HCT116 (cell line): ENCODE measurements at regions of chr12 and their contacts with region 1.

Region 1: DNA sequence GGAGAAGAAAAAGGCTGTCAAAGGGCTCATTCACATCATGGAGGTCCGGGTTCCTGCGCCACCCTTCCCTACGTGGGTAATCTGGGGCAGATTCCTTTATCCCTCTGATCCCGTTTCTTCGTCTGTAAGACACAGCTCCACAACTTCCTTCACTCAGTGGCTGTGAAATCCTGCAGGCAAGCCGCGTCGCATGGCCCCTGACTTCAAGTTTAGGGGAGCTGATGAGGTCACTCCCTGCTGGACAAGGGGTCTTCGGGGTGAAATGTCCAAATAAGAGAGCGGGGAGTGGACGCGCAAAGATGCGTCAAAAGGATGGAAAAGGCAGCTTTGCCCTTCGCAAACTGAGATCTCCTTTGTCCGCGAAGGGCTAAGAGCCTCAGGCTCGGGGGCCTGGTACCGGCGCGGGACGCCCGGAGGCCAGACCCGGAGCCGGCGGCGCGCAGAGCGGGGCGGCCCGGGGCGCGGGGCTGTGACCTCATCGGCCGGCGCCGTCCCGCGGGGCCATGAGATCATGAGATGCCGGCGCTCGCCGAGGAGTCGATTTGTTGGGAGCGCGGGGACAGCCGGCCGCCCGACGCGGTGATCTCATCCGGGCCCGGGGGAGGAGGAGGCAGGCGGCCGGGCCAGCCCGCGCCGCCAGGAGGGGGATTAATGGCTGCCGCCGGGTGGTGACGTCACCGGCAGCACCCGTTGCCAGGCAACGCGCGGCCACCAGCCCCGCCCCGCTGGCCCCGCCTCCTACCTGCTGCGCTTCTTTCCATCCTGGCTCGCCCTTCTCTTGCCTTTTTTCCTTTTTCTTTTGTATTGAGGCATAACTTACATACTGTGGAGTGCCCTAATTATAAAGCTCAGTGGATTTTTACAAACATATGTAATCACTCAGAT is 62.1 kb downstream of the HRK start:
- DNase-seq: peak; percentile 76
- ATAC-seq: peak; percentile 95
- H3K4me3 ChIP-seq: peak overlapping the region; percentile 87 to 90
- H3K27ac ChIP-seq: peak overlapping the region; percentile 71
- H3K4me1 ChIP-seq: peaks cover 10 to 17% of the 10 kb centered on the region in 2 experiments; a peak in 3 of 4 replicates
- H3K27me3 ChIP-seq: no peaks in the 10 kb centered on the region
- CTCF ChIP-seq: no peak
- POLR2A ChIP-seq: peak; percentile 14
- RAD21 ChIP-seq: no peak

Region 2: DNA sequence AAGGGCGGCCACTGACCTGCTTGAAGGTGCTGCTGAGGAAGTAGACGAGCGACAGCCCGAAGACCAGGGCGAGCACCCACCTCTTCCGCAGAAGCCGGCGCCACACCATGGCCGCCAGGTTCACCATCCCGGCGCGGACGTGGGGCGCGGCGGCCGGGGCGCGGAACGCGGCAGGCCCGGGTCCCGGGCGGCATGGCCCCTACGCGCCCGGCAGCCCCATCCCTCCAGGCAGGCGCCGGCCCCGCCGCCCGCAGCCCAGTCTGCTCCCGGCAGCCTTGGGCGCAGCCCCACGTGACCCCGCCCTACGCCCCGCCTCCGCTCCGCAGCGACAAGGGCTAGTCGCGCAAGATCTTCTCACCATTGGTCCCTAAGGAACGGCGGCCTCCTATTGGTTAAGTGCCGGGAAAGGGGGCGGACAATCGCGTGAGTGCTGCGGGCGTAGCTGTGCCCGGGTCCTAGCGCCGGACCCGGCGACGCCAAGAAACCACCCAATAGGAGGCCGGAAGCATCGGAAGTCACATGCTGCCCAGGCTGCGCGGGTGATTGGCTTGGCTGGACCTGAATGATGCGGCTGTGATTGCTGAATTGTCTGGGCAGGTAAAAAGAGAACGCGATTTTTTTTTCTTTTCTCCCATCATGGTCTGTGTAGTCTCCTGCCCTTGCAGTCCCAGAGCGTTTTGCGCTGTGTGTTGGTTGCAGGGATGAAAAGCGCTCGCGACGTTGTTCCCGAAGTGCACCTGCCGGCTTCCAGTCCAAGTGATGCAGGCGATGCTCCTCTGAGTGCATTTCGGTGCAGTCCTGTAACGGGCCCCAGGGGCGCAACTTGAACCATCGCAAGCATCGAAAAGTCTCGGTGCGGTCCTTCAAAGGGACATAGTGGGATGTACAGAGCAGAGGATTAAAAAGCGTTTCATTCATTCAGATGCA is 81.2 kb before region 1 on chr12 and contains the starts of genes RNFT2 and SPRING1:
- CTCF ChIA-PET with region 1: no interaction called
- POLR2A ChIA-PET with region 1: no interaction called
- RAD21 ChIA-PET with region 1: no interaction called
- intact Hi-C with region 1: loop called (anchors 2 kb)
- DNase-seq: peak; percentile 98
- ATAC-seq: peak; percentile 95
- H3K4me3 ChIP-seq: peak within 1 kb of the TSS; percentile 89 to 90
- H3K27ac ChIP-seq: peak within 1 kb of the TSS; percentile 37
- H3K4me1 ChIP-seq: peaks cover 11 to 21% of the 10 kb centered on the region in 2 experiments
- H3K27me3 ChIP-seq: no peaks in the 10 kb centered on the region
- CTCF ChIP-seq: peak in 1 of 3 experiments; percentile 34; a peak in 2 of 6 replicates
- POLR2A ChIP-seq: peak; percentile 50
- RAD21 ChIP-seq: no peak
- total RNA-seq, gene RNFT2: 34.9 TPM
- total RNA-seq, gene SPRING1: 28.5 TPM

Region 3: DNA sequence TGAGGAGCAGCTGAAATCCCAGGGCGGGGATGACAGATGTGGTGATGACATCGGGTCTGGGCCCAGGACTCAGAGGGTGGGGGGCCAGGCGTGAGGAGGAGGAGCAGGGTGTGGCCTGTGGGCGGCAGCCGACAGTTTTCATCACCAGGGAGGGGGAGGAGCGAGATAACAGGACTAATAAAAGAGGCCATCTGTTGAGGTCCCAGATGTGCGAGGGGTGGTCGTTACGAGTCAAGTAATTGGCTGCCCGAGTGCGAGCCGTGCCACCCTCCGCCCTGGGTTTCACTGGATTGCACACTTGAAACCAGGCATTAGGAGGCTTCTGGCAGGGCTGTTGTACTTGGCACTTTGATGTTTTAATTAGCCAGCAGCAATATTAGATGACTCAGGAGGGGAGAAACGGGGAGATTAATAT is 475.0 kb after region 1 on chr12:
- CTCF ChIA-PET with region 1: no interaction called
- POLR2A ChIA-PET with region 1: no interaction called
- RAD21 ChIA-PET with region 1: no interaction called
- intact Hi-C with region 1: no loop called
- DNase-seq: no peak
- ATAC-seq: no peak
- H3K4me3 ChIP-seq: no peak overlapping the region
- H3K27ac ChIP-seq: no peak overlapping the region
- H3K4me1 ChIP-seq: no peaks in the 10 kb centered on the region
- H3K27me3 ChIP-seq: peaks cover 12% of the 10 kb centered on the region; the same call in 1 of the 2 replicates
- CTCF ChIP-seq: no peak
- POLR2A ChIP-seq: no peak
- RAD21 ChIP-seq: no peak